ENCODE measurements at regions of chr13 and their contacts with region 1.

Region 1: GRCh38 chr13:32586080-32586900 is at the start of gene PDS5B:
- DNase-seq: peak; percentile 93
- H3K4me3 Mint-ChIP-seq: peak within 1 kb of the TSS; percentile 95
- H3K27ac Mint-ChIP-seq: peak within 1 kb of the TSS; percentile 96
- H3K4me1 Mint-ChIP-seq: peaks cover 45% of the 10 kb centered on the region
- H3K27me3 Mint-ChIP-seq: peaks cover 16% of the 10 kb centered on the region
- total RNA-seq, gene PDS5B: 57.8 and 62.7 TPM in 2 replicates

Region 2: GRCh38 chr13:32427852-32428580 is 158.3 kb before region 1 on chr13 and contains the start of gene N4BP2L1:
- intact Hi-C with region 1: loop called (anchors 2 kb)
- DNase-seq: peak; percentile 74
- H3K4me3 Mint-ChIP-seq: peak within 1 kb of the TSS; percentile 97
- H3K27ac Mint-ChIP-seq: peak within 1 kb of the TSS; percentile 98
- H3K4me1 Mint-ChIP-seq: peaks cover 53% of the 10 kb centered on the region
- H3K27me3 Mint-ChIP-seq: no peaks in the 10 kb centered on the region
- total RNA-seq, gene N4BP2L1: 17.7 and 20.0 TPM in 2 replicates

Region 3: GRCh38 chr13:32650705-32651311 is 64.5 kb after region 1 on chr13:
- intact Hi-C with region 1: loop called (anchors 1 kb)
- DNase-seq: peak; percentile 42
- H3K4me3 Mint-ChIP-seq: no peak overlapping the region
- H3K27ac Mint-ChIP-seq: no peak overlapping the region
- H3K4me1 Mint-ChIP-seq: peaks cover 52% of the 10 kb centered on the region
- H3K27me3 Mint-ChIP-seq: no peaks in the 10 kb centered on the region

Region 4: GRCh38 chr13:32791545-32792172 is 205.4 kb after region 1 on chr13:
- intact Hi-C with region 1: loop called (anchors 5 kb)
- DNase-seq: peak; percentile 33
- H3K4me3 Mint-ChIP-seq: peak overlapping the region; percentile 50
- H3K27ac Mint-ChIP-seq: peak overlapping the region; percentile 46
- H3K4me1 Mint-ChIP-seq: peaks cover 33% of the 10 kb centered on the region
- H3K27me3 Mint-ChIP-seq: no peaks in the 10 kb centered on the region

Region 5: DNA sequence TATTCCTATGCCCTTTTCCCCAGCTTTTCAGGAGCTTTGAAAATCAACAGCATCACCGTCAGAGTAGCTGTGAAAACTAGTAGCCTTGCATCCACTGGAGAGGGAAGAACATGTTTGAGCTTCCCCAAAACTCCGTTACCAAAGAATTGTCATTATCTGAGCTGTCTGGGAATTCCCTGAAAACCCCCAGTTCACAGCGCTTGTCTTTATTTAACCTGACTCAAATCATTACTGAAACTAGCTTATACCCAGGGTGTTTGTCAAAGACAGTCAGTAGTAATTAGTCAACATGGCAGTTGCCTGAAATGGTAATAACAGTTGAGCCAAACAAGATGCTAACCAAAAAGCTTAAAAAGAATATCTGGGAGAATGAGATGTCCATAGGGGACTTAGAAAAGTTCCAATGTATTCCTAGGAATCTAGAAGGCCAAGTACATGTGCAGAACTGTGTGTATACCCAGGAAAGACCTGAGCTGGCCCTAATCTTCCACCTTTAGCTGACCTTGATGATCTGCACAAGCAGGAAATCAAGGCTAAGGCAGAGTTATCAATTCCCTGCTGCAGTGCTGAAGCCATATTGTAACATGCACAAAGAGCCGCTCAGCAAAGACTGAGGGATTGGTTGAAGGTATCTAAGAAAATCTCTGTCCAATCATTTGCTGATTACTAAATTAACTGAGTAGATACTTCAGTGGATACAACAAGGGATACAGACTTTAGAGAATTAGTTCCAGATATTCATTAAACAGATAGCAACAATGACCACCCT is 560.7 kb after region 1 on chr13:
- intact Hi-C with region 1: loop called (anchors 2 kb)
- DNase-seq: peak; percentile 25
- H3K4me3 Mint-ChIP-seq: peak overlapping the region; percentile 20
- H3K27ac Mint-ChIP-seq: peak overlapping the region; percentile 81
- H3K4me1 Mint-ChIP-seq: peaks cover 41% of the 10 kb centered on the region
- H3K27me3 Mint-ChIP-seq: no peaks in the 10 kb centered on the region

Region 6: GRCh38 chr13:33303831-33304597 is 717.7 kb after region 1 on chr13:
- intact Hi-C with region 1: no loop called
- DNase-seq: no peak
- H3K4me3 Mint-ChIP-seq: no peak overlapping the region
- H3K27ac Mint-ChIP-seq: no peak overlapping the region
- H3K4me1 Mint-ChIP-seq: no peaks in the 10 kb centered on the region
- H3K27me3 Mint-ChIP-seq: peaks cover 5% of the 10 kb centered on the region

Region 7: GRCh38 chr13:33723772-33724435 is 1137.6 kb after region 1 on chr13:
- intact Hi-C with region 1: loop called (anchors 1 kb)
- DNase-seq: peak; percentile 51
- H3K4me3 Mint-ChIP-seq: no peak overlapping the region
- H3K27ac Mint-ChIP-seq: peak overlapping the region; percentile 84
- H3K4me1 Mint-ChIP-seq: peaks cover 49% of the 10 kb centered on the region
- H3K27me3 Mint-ChIP-seq: no peaks in the 10 kb centered on the region